B cell (primary cell): ENCODE measurements at regions of chr21 and their contacts with region 1.

Region 1: DNA sequence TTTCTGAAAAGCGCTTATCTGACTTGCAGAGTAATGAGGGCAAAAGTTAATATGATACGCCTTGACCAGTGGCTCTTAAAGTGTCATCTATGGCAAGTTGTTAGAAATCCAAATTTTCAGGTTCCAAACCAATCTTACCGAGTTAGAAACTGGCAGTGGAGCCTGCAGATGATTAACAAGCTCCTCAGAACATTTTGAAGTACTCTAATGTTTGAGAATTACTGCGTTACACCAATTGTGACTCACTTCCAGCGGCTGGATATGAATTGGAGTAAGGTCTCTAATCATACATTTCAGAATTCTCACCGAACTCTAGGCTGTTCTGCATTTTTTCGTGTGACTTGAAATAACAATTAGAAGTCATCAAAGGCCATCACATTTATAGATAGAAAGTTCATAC is 73.5 kb upstream of the TMPRSS15 start:
- DNase-seq: no peak
- ATAC-seq: no peak
- H3K4me3 ChIP-seq: no peak overlapping the region
- H3K4me3 Mint-ChIP-seq: no peak overlapping the region
- H3K27ac ChIP-seq: no peak overlapping the region
- H3K27ac Mint-ChIP-seq: no peak overlapping the region
- H3K4me1 ChIP-seq: no peaks in the 10 kb centered on the region
- H3K4me1 Mint-ChIP-seq: no peaks in the 10 kb centered on the region
- H3K27me3 ChIP-seq: no peaks in the 10 kb centered on the region
- H3K27me3 Mint-ChIP-seq: no peaks in the 10 kb centered on the region
- CTCF ChIP-seq: no peak

Region 2: GRCh38 chr21:18493422-18493821 is 16.4 kb after region 1 on chr21:
- CTCF ChIA-PET with region 1: interaction called, 3 read pairs
- POLR2A ChIA-PET with region 1: no interaction called
- intact Hi-C with region 1: loop called (anchors 2 kb)
- DNase-seq: no peak
- ATAC-seq: no peak
- H3K4me3 ChIP-seq: no peak overlapping the region
- H3K4me3 Mint-ChIP-seq: no peak overlapping the region
- H3K27ac ChIP-seq: no peak overlapping the region
- H3K27ac Mint-ChIP-seq: no peak overlapping the region
- H3K4me1 ChIP-seq: no peaks in the 10 kb centered on the region
- H3K4me1 Mint-ChIP-seq: no peaks in the 10 kb centered on the region
- H3K27me3 ChIP-seq: no peaks in the 10 kb centered on the region
- H3K27me3 Mint-ChIP-seq: no peaks in the 10 kb centered on the region
- CTCF ChIP-seq: no peak

Region 3: DNA sequence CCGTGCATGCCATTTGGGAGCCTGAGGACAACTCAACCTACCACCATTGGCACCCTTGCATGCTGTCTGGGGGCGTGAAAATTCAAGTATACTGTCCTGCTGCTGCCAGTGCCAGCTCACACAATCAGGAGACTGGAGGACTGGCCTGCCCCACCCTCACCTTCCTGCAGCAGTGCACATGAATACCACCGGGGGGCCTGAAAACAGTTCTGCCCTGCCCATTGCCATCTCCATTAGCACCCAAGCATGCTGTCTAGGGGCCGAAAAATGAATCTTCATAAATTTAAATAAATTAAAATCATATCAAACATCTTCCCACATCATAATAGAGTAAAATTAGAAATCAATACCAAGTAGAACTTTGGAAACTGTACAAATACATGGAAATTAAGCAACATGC is 248.6 kb after region 1 on chr21:
- CTCF ChIA-PET with region 1: no interaction called
- POLR2A ChIA-PET with region 1: no interaction called
- intact Hi-C with region 1: no loop called
- DNase-seq: no peak
- ATAC-seq: no peak
- H3K4me3 ChIP-seq: no peak overlapping the region
- H3K4me3 Mint-ChIP-seq: no peak overlapping the region
- H3K27ac ChIP-seq: no peak overlapping the region
- H3K27ac Mint-ChIP-seq: no peak overlapping the region
- H3K4me1 ChIP-seq: no peaks in the 10 kb centered on the region
- H3K4me1 Mint-ChIP-seq: no peaks in the 10 kb centered on the region
- H3K27me3 ChIP-seq: no peaks in the 10 kb centered on the region
- H3K27me3 Mint-ChIP-seq: no peaks in the 10 kb centered on the region
- CTCF ChIP-seq: no peak